Natural killer cell (primary cell): ENCODE measurements at regions of chr19 and their contacts with region 1.

Region 1: GRCh38 chr19:52048555-52049501 is at the start of gene ZNF432:
- DNase-seq: peak; percentile 84 to 90
- ATAC-seq: peak; percentile 84 to 94 (median 88)
- H3K4me3 ChIP-seq: peak within 1 kb of the TSS; percentile 77
- H3K4me3 Mint-ChIP-seq: peak within 1 kb of the TSS; percentile 98
- H3K27ac ChIP-seq: peak within 1 kb of the TSS; percentile 84
- H3K27ac Mint-ChIP-seq: peak within 1 kb of the TSS; percentile 99 to 100
- H3K4me1 ChIP-seq: peaks cover 5% of the 10 kb centered on the region
- H3K4me1 Mint-ChIP-seq: peaks cover 26 to 32% of the 10 kb centered on the region in 2 donors
- H3K27me3 ChIP-seq: no peaks in the 10 kb centered on the region
- H3K27me3 Mint-ChIP-seq: no peaks in the 10 kb centered on the region
- CTCF ChIP-seq: no peak
- total RNA-seq, gene ZNF432: 19.7 to 33.7 (median 32.4) TPM

Region 2: GRCh38 chr19:51926784-51927742 is 121.8 kb before region 1 on chr19 and contains the start of gene ZNF613:
- intact Hi-C with region 1: loop called (anchors 2 kb)
- DNase-seq: peak; percentile 76 to 91
- ATAC-seq: peak; percentile 84 to 89 (median 86)
- H3K4me3 ChIP-seq: peak within 1 kb of the TSS; percentile 78
- H3K4me3 Mint-ChIP-seq: peak within 1 kb of the TSS; percentile 96
- H3K27ac ChIP-seq: peak within 1 kb of the TSS; percentile 67
- H3K27ac Mint-ChIP-seq: peak within 1 kb of the TSS; percentile 86 to 98
- H3K4me1 ChIP-seq: peaks cover 16% of the 10 kb centered on the region
- H3K4me1 Mint-ChIP-seq: peaks cover 34 to 36% of the 10 kb centered on the region in 2 donors
- H3K27me3 ChIP-seq: no peaks in the 10 kb centered on the region
- H3K27me3 Mint-ChIP-seq: no peaks in the 10 kb centered on the region
- CTCF ChIP-seq: peak; percentile 24
- total RNA-seq, gene ZNF613: 1.8 to 3.9 (median 2.5) TPM

Region 3: GRCh38 chr19:51986309-51987291 is 62.2 kb before region 1 on chr19 and contains the start of gene ZNF350:
- intact Hi-C with region 1: loop called (anchors 1 kb)
- DNase-seq: peak; percentile 86 to 95
- ATAC-seq: peak; percentile 98 to 100 (median 98)
- H3K4me3 ChIP-seq: peak within 1 kb of the TSS; percentile 83
- H3K4me3 Mint-ChIP-seq: peak within 1 kb of the TSS; percentile 96
- H3K27ac ChIP-seq: peak within 1 kb of the TSS; percentile 68
- H3K27ac Mint-ChIP-seq: peak within 1 kb of the TSS; percentile 90 to 96
- H3K4me1 ChIP-seq: peaks cover 15% of the 10 kb centered on the region
- H3K4me1 Mint-ChIP-seq: peaks cover 12 to 13% of the 10 kb centered on the region in 2 donors
- H3K27me3 ChIP-seq: no peaks in the 10 kb centered on the region
- H3K27me3 Mint-ChIP-seq: no peaks in the 10 kb centered on the region
- CTCF ChIP-seq: no peak
- total RNA-seq, gene ZNF350: 32.3 to 46.9 (median 36.6) TPM

Region 4: DNA sequence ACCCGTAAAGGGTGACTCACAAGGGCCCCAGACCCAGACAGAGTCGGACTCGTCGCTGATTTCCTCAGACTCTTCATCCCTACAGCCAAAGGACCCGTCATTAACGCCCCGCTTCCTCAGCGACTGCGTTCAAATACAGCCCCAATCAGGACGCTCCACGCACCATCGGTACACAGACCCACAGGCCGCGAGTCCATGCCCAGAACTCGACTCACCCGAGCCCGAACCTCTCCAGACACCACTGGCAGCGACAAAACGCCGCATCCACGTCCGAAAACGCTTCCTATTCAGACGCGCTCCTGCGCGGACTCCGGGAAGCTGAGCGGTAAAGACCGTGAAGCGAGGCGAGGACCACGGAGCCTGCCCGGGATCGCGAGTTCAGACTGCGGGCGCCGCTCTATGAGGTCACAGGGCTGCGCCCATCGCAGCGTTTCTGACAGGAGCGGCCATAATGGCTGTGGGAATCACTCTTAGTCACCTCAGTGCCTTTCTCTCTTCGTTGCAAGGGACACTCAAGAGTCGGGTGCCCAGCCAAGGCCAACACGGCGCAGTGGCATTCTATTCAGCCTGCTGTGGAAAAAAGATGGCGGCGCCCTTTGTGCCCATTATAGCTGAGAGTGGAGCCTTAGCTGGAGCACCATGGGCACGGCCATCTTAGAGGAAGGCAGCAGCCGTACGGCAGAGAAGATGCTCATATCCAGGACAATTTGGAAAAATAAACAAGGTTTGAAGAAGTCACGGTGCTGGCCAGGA is 20.6 kb before region 1 on chr19 and contains the start of gene ZNF614:
- intact Hi-C with region 1: loop called (anchors 1 kb)
- DNase-seq: peak; percentile 90
- ATAC-seq: peak; percentile 83 to 94 (median 87)
- H3K4me3 ChIP-seq: peak within 1 kb of the TSS; percentile 84
- H3K4me3 Mint-ChIP-seq: peak within 1 kb of the TSS; percentile 89
- H3K27ac ChIP-seq: peak within 1 kb of the TSS; percentile 93
- H3K27ac Mint-ChIP-seq: peak within 1 kb of the TSS; percentile 94 to 99
- H3K4me1 ChIP-seq: peaks cover 7% of the 10 kb centered on the region
- H3K4me1 Mint-ChIP-seq: peaks cover 24 to 30% of the 10 kb centered on the region in 2 donors
- H3K27me3 ChIP-seq: no peaks in the 10 kb centered on the region
- H3K27me3 Mint-ChIP-seq: no peaks in the 10 kb centered on the region
- CTCF ChIP-seq: no peak
- total RNA-seq, gene ZNF614: 4.3 to 9.2 (median 5.7) TPM

Region 5: GRCh38 chr19:52189735-52190486 is 141.1 kb after region 1 on chr19 and contains the start of gene PPP2R1A:
- intact Hi-C with region 1: loop called (anchors 1 kb)
- DNase-seq: peak; percentile 97 to 100
- ATAC-seq: peak; percentile 84 to 93 (median 85)
- H3K4me3 ChIP-seq: peak within 1 kb of the TSS; percentile 61
- H3K4me3 Mint-ChIP-seq: peak within 1 kb of the TSS; percentile 99
- H3K27ac ChIP-seq: peak within 1 kb of the TSS; percentile 87
- H3K27ac Mint-ChIP-seq: peak within 1 kb of the TSS; percentile 99
- H3K4me1 ChIP-seq: peaks cover 36% of the 10 kb centered on the region
- H3K4me1 Mint-ChIP-seq: peaks cover 51 to 57% of the 10 kb centered on the region in 2 donors
- H3K27me3 ChIP-seq: no peaks in the 10 kb centered on the region
- H3K27me3 Mint-ChIP-seq: no peaks in the 10 kb centered on the region
- CTCF ChIP-seq: no peak
- total RNA-seq, gene PPP2R1A: 221 to 256 (median 232) TPM